ENCODE measurements at regions of chr1 and their contacts with region 1.

Region 1: DNA sequence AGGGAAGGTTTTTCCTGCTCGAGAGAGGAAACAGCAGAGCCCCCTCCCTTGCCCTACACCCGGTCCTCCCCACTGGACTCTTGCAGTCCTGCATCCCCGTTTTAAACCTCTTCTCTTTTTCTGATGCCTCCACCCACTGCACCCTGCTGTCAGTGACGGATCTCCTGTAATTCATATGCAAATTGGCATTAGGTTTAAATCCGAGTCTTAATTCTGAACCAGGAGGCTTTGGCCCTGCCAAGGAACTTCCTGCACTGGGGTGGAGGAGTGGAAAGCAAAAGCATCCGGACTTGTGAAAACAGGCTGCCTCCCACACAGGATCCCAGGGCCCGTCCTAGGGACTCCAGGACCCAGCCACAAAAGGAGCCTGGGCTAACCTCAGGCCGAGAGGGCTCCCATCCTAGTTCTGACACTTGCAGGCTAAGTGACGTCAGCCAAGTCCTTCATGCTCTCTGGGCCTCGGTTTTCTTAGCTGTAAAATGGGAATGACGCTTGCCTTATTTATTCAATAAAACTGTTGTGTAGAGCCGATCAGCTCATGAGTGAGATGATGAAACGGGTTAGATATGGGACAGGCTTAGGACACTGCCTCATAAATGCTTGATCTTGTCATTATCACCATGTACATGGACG is 613.3 kb downstream of the AJAP1 start:
- DNase-seq: no peak
- H3K4me3 ChIP-seq: no peak overlapping the region
- H3K27ac ChIP-seq: no peak overlapping the region
- H3K4me1 ChIP-seq: no peaks in the 10 kb centered on the region
- H3K27me3 ChIP-seq: no peaks in the 10 kb centered on the region
- CTCF ChIP-seq: no peak

Region 2: DNA sequence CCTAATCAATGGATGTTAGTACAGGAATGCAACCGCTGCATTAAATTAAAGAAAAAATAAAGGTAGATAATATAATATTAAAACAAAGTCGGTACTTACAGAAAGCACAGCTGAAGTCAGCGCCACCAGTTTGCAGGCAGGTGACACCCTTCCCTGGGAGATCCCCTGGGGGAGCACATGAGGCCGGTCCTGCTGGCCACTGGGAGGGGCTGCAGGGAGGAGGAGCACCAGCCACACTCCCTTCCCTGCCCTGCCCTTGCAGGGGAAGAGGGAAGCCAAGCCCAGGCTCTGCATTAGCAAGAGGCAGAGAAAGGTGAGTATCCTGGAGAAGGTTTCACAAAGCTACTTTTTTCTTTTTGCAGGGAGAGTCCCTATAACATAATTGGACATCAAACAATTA is 106.3 kb before region 1 on chr1:
- CTCF ChIA-PET with region 1: no interaction called
- dilution Hi-C with region 1: loop called (anchors 5 kb)
- in situ Hi-C with region 1: no loop called
- intact Hi-C with region 1: no loop called
- DNase-seq: no peak
- H3K4me3 ChIP-seq: no peak overlapping the region
- H3K27ac ChIP-seq: no peak overlapping the region
- H3K4me1 ChIP-seq: no peaks in the 10 kb centered on the region
- H3K27me3 ChIP-seq: no peaks in the 10 kb centered on the region
- CTCF ChIP-seq: no peak